ENCODE measurements at regions of chr11 and their contacts with region 1.

Region 1: DNA sequence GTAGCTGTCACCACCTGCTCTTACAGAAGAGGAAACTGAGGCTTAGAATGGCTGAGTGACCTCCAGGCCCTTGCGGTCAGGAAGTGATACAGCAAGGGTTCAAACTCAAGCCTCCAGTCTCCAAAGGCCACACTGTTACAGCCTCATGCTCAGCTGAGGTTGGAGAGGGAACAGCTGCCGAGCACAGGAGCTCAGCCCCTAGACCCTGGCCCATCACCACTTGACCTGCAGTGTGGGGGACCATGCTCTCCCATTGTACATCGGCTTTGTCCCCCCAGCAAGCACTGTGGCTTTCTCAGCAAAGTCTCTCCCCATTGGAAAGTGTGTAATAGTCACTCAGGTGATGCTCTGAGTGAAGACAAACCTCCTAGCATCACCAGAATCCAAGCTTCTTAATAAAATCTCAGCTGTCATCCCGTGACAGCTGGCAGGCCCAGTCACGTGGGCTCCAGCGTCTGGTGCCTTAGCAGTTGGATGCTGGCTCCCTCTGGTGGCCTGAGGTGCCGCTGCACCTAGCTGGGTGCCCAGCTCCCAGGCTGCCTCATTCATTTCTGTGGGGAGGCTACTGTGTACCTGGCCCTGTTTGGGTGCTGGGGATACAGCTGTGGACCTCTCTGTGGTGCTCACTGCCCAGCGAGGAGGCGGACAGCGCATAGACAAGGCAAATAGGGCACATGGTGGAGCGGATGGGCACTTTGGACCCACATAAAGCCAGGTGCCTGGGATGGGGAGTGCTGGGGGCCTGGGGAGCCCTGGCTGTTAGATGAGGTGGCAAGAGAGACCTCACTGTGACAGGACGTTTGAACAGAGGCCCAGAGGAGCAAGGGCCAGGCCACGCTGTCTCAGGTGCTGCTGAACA is 19.1 kb upstream of the MYRF start:
- DNase-seq: peak; percentile 66
- H3K4me3 ChIP-seq: no peak overlapping the region
- H3K27ac ChIP-seq: no peak overlapping the region
- H3K4me1 ChIP-seq: no peaks in the 10 kb centered on the region
- H3K27me3 ChIP-seq: no peaks in the 10 kb centered on the region
- CTCF ChIP-seq: peak; percentile 98 to 99
- POLR2A ChIP-seq: no peak

Region 2: DNA sequence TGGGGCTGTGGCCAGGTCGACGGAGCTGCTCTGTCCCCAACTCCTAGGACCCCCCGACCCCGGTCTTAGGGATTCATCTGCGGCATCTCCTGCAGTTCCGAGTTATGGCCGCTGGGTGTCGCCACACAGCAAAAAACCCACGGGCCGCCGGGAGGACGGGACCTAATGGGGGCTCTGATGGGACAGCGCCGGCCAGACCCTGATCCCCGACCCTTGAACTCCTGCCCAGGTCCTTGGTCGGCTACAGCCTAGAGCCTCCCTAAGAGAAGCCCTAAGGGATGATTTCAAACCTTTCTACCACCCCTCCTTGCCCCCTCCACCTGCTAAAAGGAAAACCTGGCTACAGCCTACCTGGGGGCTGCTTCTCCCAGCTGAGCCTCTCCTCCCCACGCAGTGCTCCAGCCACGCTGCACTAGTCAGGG is 255.6 kb before region 1 on chr11:
- CTCF ChIA-PET with region 1: interaction called, 11 read pairs
- POLR2A ChIA-PET with region 1: no interaction called
- dilution Hi-C with region 1: no loop called
- intact Hi-C with region 1: no loop called
- DNase-seq: peak; percentile 39
- H3K4me3 ChIP-seq: no peak overlapping the region
- H3K27ac ChIP-seq: no peak overlapping the region
- H3K4me1 ChIP-seq: no peaks in the 10 kb centered on the region
- H3K27me3 ChIP-seq: no peaks in the 10 kb centered on the region
- CTCF ChIP-seq: peak; percentile 80 to 89
- POLR2A ChIP-seq: no peak

Region 3: DNA sequence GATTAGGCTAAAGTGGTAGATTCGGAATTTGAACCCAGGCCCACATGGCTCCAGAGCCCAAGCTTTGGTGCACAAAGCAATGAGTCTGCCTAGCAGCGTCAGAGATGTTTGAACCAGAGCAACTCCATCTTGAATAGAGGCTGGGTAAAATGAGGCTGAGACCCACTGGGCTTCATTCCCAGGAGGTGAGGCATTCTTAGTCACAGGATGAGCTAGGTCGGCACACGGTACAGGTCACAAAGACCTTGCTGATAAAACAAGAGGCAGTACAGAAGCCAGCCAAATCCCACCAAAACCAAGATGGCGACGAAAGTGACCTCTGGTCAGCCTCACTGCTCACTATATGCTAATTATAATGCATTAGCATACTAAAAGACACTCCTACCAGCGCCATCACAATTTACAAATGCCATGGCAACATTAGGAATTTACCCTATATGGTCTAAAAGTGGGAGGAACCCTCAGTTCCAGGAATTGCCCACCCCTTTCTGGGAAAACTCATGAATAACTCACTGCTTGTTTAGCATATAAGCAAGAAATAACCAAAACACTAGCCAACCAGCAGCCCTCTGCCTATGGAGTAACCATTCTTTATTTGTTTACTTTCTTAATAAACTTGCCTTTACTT is 93.4 kb before region 1 on chr11:
- CTCF ChIA-PET with region 1: interaction called, 49 read pairs
- POLR2A ChIA-PET with region 1: no interaction called
- dilution Hi-C with region 1: no loop called
- intact Hi-C with region 1: no loop called
- DNase-seq: no peak
- H3K4me3 ChIP-seq: no peak overlapping the region
- H3K27ac ChIP-seq: no peak overlapping the region
- H3K4me1 ChIP-seq: no peaks in the 10 kb centered on the region
- H3K27me3 ChIP-seq: no peaks in the 10 kb centered on the region
- CTCF ChIP-seq: no peak
- POLR2A ChIP-seq: no peak

Region 4: DNA sequence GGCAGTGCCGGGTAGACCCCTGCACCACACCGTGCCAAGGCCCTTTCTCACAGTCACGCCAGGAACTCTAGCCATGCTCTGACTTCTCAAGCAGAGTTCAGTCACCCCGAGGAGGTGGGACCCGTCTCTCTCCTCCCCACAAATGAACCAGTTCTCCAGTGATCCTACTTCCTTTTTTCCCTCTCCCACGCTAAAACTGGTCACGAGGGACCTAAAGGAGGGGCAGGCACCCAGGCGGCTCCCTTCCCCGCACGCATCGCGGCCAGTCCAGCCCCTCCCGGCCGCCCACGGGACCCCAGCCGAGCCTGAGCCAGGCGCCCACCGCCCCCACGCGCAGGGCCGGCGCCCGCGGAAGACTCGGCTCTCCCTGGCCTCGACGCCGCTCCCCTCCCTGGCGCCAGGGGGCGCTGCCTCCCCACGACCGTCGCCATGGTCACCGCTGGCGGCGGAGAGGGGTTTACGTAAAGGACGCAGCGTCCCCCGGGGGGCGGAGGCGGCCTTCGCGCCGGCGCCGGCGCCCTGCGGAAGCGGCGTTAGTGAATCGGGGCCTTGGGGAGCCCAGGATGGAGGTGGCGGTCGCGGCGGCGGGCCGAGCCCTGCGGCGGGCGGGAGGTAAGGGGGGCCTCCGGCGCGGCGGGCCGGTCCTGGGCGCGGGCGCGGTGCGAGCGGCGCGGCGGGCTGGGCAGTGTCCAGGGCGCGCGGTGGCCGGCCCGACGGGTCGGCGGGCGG is 53.3 kb before region 1 on chr11 and contains the start of gene DAGLA:
- CTCF ChIA-PET with region 1: interaction called, 25 read pairs
- POLR2A ChIA-PET with region 1: no interaction called
- dilution Hi-C with region 1: no loop called
- intact Hi-C with region 1: loop called (anchors 1 kb)
- DNase-seq: peak; percentile 54
- H3K4me3 ChIP-seq: peak within 1 kb of the TSS in 2 of 3 experiments; percentile 9 to 42
- H3K27ac ChIP-seq: no peak within 1 kb of the TSS
- H3K4me1 ChIP-seq: peaks cover 16% of the 10 kb centered on the region
- H3K27me3 ChIP-seq: peaks cover 12 to 24% of the 10 kb centered on the region in 2 experiments
- CTCF ChIP-seq: peak; percentile 91 to 97
- POLR2A ChIP-seq: peak; percentile 37
- total RNA-seq, gene DAGLA: 3.5 and 4.7 TPM in 2 replicates

Region 5: DNA sequence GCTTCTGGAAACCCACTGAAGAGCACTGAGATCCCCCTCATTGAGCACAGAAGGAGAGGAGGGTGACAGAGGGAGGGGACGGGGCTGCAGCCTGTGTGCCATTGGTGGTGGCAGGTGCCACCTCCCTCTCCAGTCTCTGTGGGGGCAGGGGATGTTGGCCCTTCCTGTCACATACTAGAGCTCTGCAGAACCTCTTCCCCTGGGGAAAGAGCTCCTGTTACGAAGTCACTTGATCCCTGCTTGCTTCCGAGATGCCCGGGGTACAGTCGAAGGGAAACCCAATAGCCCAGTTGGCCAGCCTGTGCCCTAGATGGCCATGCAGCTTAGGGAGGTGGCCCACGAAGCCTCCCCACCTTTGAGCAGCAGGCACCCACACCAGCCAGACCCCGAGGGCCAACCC is 23.8 kb before region 1 on chr11:
- CTCF ChIA-PET with region 1: interaction called, 12 read pairs
- POLR2A ChIA-PET with region 1: no interaction called
- dilution Hi-C with region 1: no loop called
- intact Hi-C with region 1: no loop called
- DNase-seq: no peak
- H3K4me3 ChIP-seq: no peak overlapping the region
- H3K27ac ChIP-seq: no peak overlapping the region
- H3K4me1 ChIP-seq: no peaks in the 10 kb centered on the region
- H3K27me3 ChIP-seq: no peaks in the 10 kb centered on the region
- CTCF ChIP-seq: no peak
- POLR2A ChIP-seq: no peak

Region 6: GRCh38 chr11:61747192-61747966 is 14.0 kb after region 1 on chr11:
- CTCF ChIA-PET with region 1: interaction called, 21 read pairs
- POLR2A ChIA-PET with region 1: no interaction called
- dilution Hi-C with region 1: no loop called
- intact Hi-C with region 1: no loop called
- DNase-seq: peak; percentile 52
- H3K4me3 ChIP-seq: no peak overlapping the region
- H3K27ac ChIP-seq: no peak overlapping the region
- H3K4me1 ChIP-seq: no peaks in the 10 kb centered on the region
- H3K27me3 ChIP-seq: no peaks in the 10 kb centered on the region
- CTCF ChIP-seq: peak; percentile 93 to 98
- POLR2A ChIP-seq: no peak

Measured in endothelial cell of umbilical vein (primary cell).